Activated T-helper 1 cell treated with anti-CD3 and anti-CD28 coated beads, Interleukin-12 subunit alpha, Interleukin-12 subunit beta, Interleukin-2, Interleukin-4 antibody, amounts not matched to agents 30 ng/mL and 10 ng/mL and 1 ng/mL, durations not matched to agents 14 hours and 24 hours and 36 hours (primary cell): ENCODE measurements at regions of chr9 and their contacts with region 1.

Region 1: GRCh38 chr9:133133681-133134418 is 12.8 kb upstream of the RALGDS start:
- DNase-seq: peak; percentile 91
- H3K4me3 Mint-ChIP-seq: peak overlapping the region; percentile 81
- H3K27ac Mint-ChIP-seq: peak overlapping the region; percentile 100
- H3K4me1 Mint-ChIP-seq: peaks cover 67% of the 10 kb centered on the region
- H3K27me3 Mint-ChIP-seq: no peaks in the 10 kb centered on the region

Region 2: GRCh38 chr9:133121198-133121939 is 12.5 kb before region 1 on chr9 and contains the start of gene RALGDS:
- intact Hi-C with region 1: loop called (anchors 1 kb)
- DNase-seq: peak; percentile 84
- H3K4me3 Mint-ChIP-seq: peak within 1 kb of the TSS; percentile 86
- H3K27ac Mint-ChIP-seq: peak within 1 kb of the TSS; percentile 94
- H3K4me1 Mint-ChIP-seq: peaks cover 61% of the 10 kb centered on the region
- H3K27me3 Mint-ChIP-seq: no peaks in the 10 kb centered on the region
- total RNA-seq, gene RALGDS: 88.7 and 94.4 TPM in 2 replicates